GM10248 (cell line): ENCODE measurements at regions of chr1 and their contacts with region 1.

Region 1: GRCh38 chr1:37486680-37487618 is 12.6 kb downstream of the ZC3H12A start:
- DNase-seq: peak; percentile 79
- CTCF ChIP-seq: peak; percentile 93

Region 2: GRCh38 chr1:37410815-37411214 is 76.1 kb before region 1 on chr1:
- CTCF ChIA-PET with region 1: no interaction called
- POLR2A ChIA-PET with region 1: no interaction called
- DNase-seq: no peak
- CTCF ChIP-seq: no peak

Region 3: DNA sequence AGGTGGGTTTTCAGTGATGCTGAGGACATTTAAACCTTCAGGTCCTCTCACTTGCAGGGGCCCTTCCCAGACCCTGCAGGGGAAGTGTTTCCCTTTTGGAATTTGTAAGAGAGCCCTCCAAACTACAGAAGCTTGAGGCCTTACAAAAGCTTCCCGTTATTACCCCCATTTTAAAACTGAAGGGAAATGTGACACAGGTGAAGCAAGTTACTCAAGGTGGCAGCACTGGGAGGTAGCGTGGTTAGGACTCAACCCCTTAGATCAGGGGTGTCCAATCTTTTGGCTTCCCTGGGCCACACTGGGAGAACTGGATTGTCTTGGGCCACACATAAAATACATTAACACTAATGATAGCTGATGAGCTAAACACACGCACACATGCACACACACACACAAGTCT is 28.4 kb before region 1 on chr1:
- CTCF ChIA-PET with region 1: interaction called, 209 read pairs
- POLR2A ChIA-PET with region 1: no interaction called
- DNase-seq: no peak
- CTCF ChIP-seq: peak; percentile 13

Region 4: DNA sequence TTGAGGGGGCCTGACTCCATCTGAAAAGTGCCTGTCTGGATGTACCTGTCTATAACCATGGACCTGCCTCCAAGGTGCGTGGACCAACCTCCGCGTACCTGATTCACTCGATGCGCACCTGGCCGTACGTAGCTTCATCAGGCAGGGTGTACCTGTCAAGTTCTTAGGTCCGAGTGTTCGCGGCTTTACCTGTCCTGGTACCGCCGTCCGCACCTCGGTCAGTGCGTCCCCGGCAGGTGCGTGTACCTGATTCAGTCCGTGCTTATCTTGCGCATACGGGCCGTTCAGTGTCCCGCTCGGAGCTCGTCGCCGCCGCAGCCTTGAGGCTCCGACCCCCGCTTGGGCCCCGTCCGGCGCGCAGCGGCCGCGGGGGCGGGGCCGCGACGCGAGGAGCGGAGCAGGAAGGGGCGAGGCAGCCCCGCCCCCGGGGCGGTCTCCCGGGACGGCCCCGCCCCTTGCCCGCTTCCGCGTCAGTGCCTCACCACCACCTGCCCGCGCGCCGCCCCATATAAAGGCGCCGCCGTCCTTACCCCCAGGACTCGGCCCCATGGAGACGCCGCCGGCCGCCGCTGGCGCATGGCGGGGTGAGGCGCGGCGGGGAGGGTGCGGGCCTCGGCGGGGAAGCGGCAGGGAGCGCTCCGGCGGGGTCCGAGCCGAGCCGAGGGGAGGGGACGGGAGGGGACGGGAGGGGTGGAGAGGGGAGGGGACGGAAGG is 12.7 kb before region 1 on chr1 and contains the start of gene ZC3H12A:
- CTCF ChIA-PET with region 1: interaction called, 142 read pairs
- POLR2A ChIA-PET with region 1: interaction called, 112 read pairs
- DNase-seq: peak; percentile 99
- CTCF ChIP-seq: no peak

Region 5: GRCh38 chr1:37509181-37509580 is 22.2 kb after region 1 on chr1:
- CTCF ChIA-PET with region 1: interaction called, 104 read pairs
- POLR2A ChIA-PET with region 1: no interaction called
- DNase-seq: peak; percentile 21
- CTCF ChIP-seq: peak; percentile 23